Activated CD8-positive, alpha-beta T cell treated with anti-CD3 and anti-CD28 coated beads for 36 hours (primary cell): ENCODE measurements at regions of chr3 and their contacts with region 1.

Region 1: DNA sequence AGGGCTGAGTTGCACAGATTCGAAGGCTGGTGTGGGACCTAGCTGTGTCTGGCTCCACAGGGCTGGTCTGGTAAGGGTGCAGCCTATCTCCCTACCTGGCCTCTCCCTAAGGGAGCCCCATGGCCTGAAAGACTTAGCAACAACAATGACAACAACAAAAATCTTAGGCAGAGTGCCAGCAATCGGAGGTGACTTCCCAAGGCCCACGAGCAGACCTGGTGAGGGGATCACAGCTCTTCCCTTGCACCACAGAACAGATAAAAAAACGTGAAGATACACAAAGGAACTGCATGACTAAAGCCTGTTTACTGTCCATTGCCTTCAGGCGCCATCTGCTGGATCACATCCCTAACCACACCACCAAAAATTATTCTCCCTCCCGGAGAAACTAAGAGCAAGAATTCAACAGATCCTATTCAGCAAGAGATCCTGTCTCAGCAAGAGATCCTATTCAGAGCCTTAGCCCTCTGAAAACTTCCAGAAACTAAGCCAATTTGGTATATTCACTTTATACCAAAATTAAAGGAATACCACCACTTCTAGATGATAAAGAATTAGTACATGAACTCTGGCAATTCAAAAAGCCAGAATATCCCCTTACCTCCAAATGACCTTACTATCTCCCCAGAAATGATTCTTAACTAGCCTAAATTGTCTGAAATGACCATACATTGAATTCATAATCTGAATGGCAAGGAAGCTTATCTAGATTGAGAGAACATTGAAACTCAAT is 24.1 kb upstream of the OR5K4 start:
- DNase-seq: peak; percentile 69
- ATAC-seq: peak; percentile 89
- H3K4me3 Mint-ChIP-seq: no peak overlapping the region
- H3K27ac Mint-ChIP-seq: no peak overlapping the region
- H3K4me1 Mint-ChIP-seq: no peaks in the 10 kb centered on the region
- H3K27me3 Mint-ChIP-seq: peaks cover 19% of the 10 kb centered on the region
- CTCF ChIP-seq: peak; percentile 75

Region 2: DNA sequence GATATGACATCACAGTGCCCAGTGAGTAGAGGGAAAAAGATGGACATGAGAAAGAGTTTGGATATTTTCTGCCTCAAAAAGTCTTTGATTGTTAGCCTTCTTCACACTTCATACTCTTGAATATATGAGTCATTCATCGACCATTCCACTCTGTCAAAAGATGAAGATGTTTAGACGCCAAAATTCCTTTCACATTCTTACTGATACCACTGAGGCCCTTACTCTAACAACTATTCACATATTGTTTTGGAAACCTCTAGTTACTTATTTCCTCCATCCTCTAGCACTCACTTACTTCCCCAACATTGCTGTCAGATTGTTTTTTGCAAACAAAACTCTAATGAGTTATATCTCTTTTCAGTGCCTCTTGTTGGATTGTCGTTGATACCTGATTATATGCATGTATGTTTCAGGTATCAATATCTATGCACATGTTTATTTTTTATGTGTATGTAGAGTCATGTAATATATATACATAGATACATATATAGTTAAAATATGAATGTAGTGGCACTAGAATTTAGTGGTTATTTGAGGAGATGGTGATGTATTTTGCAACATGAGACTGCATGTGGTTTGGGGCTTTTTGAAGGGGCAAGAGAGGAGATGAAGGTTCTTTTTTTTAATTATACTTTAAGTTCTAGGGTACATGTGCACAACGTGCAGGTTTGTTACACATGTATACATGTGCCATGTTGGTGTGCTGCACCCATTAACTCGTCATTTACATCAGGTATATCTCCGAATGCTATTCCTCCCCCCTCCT is 105.5 kb before region 1 on chr3:
- CTCF ChIA-PET with region 1: no interaction called
- POLR2A ChIA-PET with region 1: no interaction called
- intact Hi-C with region 1: no loop called
- DNase-seq: no peak
- ATAC-seq: no peak
- H3K4me3 Mint-ChIP-seq: no peak overlapping the region
- H3K27ac Mint-ChIP-seq: no peak overlapping the region
- H3K4me1 Mint-ChIP-seq: no peaks in the 10 kb centered on the region
- H3K27me3 Mint-ChIP-seq: peaks cover 2% of the 10 kb centered on the region
- CTCF ChIP-seq: no peak

Region 3: GRCh38 chr3:98291332-98291957 is 38.1 kb before region 1 on chr3:
- CTCF ChIA-PET with region 1: no interaction called
- POLR2A ChIA-PET with region 1: no interaction called
- intact Hi-C with region 1: no loop called
- DNase-seq: no peak
- ATAC-seq: no peak
- H3K4me3 Mint-ChIP-seq: no peak overlapping the region
- H3K27ac Mint-ChIP-seq: no peak overlapping the region
- H3K4me1 Mint-ChIP-seq: no peaks in the 10 kb centered on the region
- H3K27me3 Mint-ChIP-seq: peaks cover 5% of the 10 kb centered on the region
- CTCF ChIP-seq: no peak

Region 4: DNA sequence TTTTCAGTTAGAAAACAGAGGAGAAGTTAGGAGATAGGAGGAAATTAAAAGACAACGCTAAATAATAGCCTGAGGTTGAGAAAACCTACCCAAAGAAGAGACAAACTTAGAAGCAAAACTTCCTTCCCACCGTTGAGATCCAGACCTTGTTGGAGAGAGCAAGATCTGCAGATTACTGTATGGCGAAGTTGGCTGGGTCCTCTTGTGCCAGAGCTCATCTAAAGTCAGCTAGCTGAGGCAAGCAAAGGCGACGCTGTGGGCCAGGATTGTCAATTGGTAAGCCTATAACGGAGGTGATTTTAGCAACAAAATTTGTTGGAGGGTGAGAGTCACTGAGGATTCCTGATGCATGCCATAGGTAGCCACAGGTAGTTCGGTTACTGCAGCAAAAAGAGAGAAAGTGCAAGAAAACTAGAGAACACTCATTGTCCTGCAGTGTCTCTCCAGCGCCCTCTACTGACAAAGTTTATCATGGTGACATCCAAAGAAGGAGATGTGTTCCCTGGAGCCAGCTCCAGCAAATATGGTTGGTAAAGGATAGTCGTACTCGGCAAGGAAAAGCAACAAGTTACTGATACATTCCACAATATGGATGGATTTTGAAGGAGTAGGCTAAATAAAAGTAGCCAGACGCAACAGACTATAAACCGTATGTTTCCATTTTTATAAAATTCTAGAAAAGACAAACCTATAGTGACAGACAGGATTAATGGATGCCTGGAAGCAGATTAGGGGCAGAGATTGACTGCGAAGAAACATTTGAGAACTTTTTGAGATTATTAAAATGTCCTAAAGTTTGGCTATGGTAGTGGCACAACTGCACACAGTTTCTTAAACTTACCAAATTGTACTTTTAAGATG is 14.3 kb after region 1 on chr3:
- CTCF ChIA-PET with region 1: interaction called, 13 read pairs
- POLR2A ChIA-PET with region 1: no interaction called
- intact Hi-C with region 1: no loop called
- DNase-seq: peak; percentile 51
- ATAC-seq: peak; percentile 37
- H3K4me3 Mint-ChIP-seq: no peak overlapping the region
- H3K27ac Mint-ChIP-seq: no peak overlapping the region
- H3K4me1 Mint-ChIP-seq: no peaks in the 10 kb centered on the region
- H3K27me3 Mint-ChIP-seq: peaks cover 12% of the 10 kb centered on the region
- CTCF ChIP-seq: peak; percentile 77